A673 (cell line): ENCODE measurements at regions of chr12 and their contacts with region 1.

Region 1: GRCh38 chr12:46556105-46556559 is 183.6 kb upstream of the SLC38A2 start:
- DNase-seq: peak; percentile 78
- H3K4me3 ChIP-seq: no peak overlapping the region
- H3K27ac ChIP-seq: peak overlapping the region; percentile 83
- H3K4me1 ChIP-seq: peaks cover 78% of the 10 kb centered on the region
- H3K27me3 ChIP-seq: no peaks in the 10 kb centered on the region
- CTCF ChIP-seq: no peak

Region 2: GRCh38 chr12:46386877-46387629 is 169.1 kb before region 1 on chr12:
- CTCF ChIA-PET with region 1: no interaction called
- POLR2A ChIA-PET with region 1: no interaction called
- intact Hi-C with region 1: loop called (anchors 5 kb)
- DNase-seq: peak; percentile 94
- H3K4me3 ChIP-seq: peak overlapping the region; percentile 23
- H3K27ac ChIP-seq: peak overlapping the region; percentile 67
- H3K4me1 ChIP-seq: peaks cover 80% of the 10 kb centered on the region
- H3K27me3 ChIP-seq: no peaks in the 10 kb centered on the region
- CTCF ChIP-seq: no peak